Transverse colon (tissue), 4 donors: ENCODE measurements at regions of chr16 and their contacts with region 1.

Region 1: GRCh38 chr16:67279296-67280089 is at the start of gene PLEKHG4:
- DNase-seq: peak; percentile 85
- H3K4me3 ChIP-seq: peak within 1 kb of the TSS; percentile 52 to 78 (median 58)
- H3K27ac ChIP-seq: peak within 1 kb of the TSS; percentile 52 to 78 (median 66)
- H3K4me1 ChIP-seq: peaks cover 0 to 23% (median 21%) of the 10 kb centered on the region in 4 donors
- H3K27me3 ChIP-seq: no peaks in the 10 kb centered on the region
- CTCF ChIP-seq: peak in 4 of 5 experiments; percentile 59 to 84 (median 62)
- EP300 ChIP-seq: no peak
- POLR2A ChIP-seq: no peak
- total RNA-seq, gene PLEKHG4: 0.80 to 12.2 (median 8.7) TPM

Region 2: GRCh38 chr16:66604376-66605176 is 674.9 kb before region 1 on chr16 and contains the start of gene CMTM3:
- in situ Hi-C with region 1: no loop called
- intact Hi-C with region 1: no loop called
- DNase-seq: peak; percentile 59
- H3K4me3 ChIP-seq: peak within 1 kb of the TSS; percentile 54 to 84 (median 71)
- H3K27ac ChIP-seq: peak within 1 kb of the TSS; percentile 81 to 88 (median 84)
- H3K4me1 ChIP-seq: peaks cover 0 to 41% (median 22%) of the 10 kb centered on the region in 4 donors
- H3K27me3 ChIP-seq: peaks cover 17% of the 10 kb centered on the region
- CTCF ChIP-seq: peak; percentile 58 to 79 (median 65)
- EP300 ChIP-seq: no peak
- POLR2A ChIP-seq: no peak
- total RNA-seq, gene CMTM3: 2.4 to 11.6 (median 6.1) TPM in 3 of 4 donors, not detected in the other

Region 3: GRCh38 chr16:67399181-67399733 is 119.8 kb after region 1 on chr16:
- in situ Hi-C with region 1: loop called in 1 of 4 experiments (anchors 25 kb)
- intact Hi-C with region 1: loop called (anchors 5 kb)
- DNase-seq: no peak
- H3K4me3 ChIP-seq: no peak overlapping the region
- H3K27ac ChIP-seq: no peak overlapping the region
- H3K4me1 ChIP-seq: peaks cover 27 to 48% (median 33%) of the 10 kb centered on the region in 4 donors
- H3K27me3 ChIP-seq: no peaks in the 10 kb centered on the region
- CTCF ChIP-seq: peak; percentile 58 to 80 (median 76)
- EP300 ChIP-seq: no peak
- POLR2A ChIP-seq: no peak

Region 4: GRCh38 chr16:67613808-67614207 is 334.3 kb after region 1 on chr16:
- in situ Hi-C with region 1: no loop called
- intact Hi-C with region 1: no loop called
- DNase-seq: no peak
- H3K4me3 ChIP-seq: no peak overlapping the region
- H3K27ac ChIP-seq: no peak overlapping the region
- H3K4me1 ChIP-seq: no peaks in the 10 kb centered on the region
- H3K27me3 ChIP-seq: no peaks in the 10 kb centered on the region
- CTCF ChIP-seq: no peak
- EP300 ChIP-seq: no peak
- POLR2A ChIP-seq: no peak